ENCODE measurements at regions of chr4 and their contacts with region 1.

Region 1: GRCh38 chr4:149426461-149426860 is 389.2 kb downstream of the IQCM start:
- DNase-seq: no peak
- CTCF ChIP-seq: no peak

Region 2: GRCh38 chr4:149441338-149441737 is 14.9 kb after region 1 on chr4:
- CTCF ChIA-PET with region 1: interaction called, 15 read pairs
- POLR2A ChIA-PET with region 1: no interaction called
- DNase-seq: no peak
- CTCF ChIP-seq: no peak

Measured in GM10248 (cell line).